ENCODE measurements at regions of chr7 and their contacts with region 1.

Region 1: DNA sequence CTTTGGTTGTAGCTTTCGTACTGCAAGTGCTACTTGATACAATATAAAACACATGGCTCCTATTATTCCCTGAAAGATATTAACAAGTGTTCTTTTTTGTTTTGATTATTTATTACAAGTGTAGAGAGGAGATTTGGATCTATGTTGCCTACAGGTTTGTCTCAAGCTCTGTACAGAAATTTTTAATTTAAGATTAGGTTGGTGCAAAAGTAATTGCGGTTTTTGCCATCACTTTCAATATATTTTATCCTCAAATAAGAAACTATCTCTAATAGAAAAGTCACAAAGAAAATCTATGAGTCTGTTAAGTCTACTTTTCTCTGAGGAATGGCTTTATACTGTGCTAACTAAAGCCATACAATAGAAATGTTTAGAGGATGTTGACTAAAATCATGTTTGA is 1086.1 kb downstream of the GRM8 start:
- DNase-seq: no peak
- H3K4me3 ChIP-seq: no peak overlapping the region
- H3K27ac ChIP-seq: no peak overlapping the region
- H3K4me1 ChIP-seq: no peaks in the 10 kb centered on the region
- H3K27me3 ChIP-seq: no peaks in the 10 kb centered on the region
- CTCF ChIP-seq: no peak
- POLR2A ChIP-seq: no peak

Region 2: DNA sequence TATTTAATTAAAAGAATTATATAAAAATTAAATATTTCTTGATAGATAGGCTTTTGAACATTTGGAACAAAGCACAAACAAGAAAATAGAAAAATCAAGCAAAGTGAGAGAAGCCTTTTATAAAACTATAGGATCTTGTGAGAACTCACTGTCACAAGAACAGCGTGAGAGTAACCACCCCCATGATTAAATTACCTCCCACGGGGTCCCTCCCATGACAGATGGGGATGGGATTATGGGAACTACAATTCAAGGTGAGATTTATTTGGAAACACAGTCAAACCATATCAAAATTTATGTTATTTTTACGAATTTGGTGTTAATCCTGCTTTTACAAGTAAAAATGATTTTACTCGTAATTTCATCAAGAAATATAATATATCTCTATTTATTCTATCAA is 100.9 kb before region 1 on chr7:
- CTCF ChIA-PET with region 1: no interaction called
- POLR2A ChIA-PET with region 1: no interaction called
- dilution Hi-C with region 1: no loop called
- intact Hi-C with region 1: no loop called
- DNase-seq: no peak
- H3K4me3 ChIP-seq: no peak overlapping the region
- H3K27ac ChIP-seq: no peak overlapping the region
- H3K4me1 ChIP-seq: no peaks in the 10 kb centered on the region
- H3K27me3 ChIP-seq: no peaks in the 10 kb centered on the region
- CTCF ChIP-seq: no peak
- POLR2A ChIP-seq: no peak

Region 3: GRCh38 chr7:126083014-126083413 is 83.6 kb before region 1 on chr7:
- CTCF ChIA-PET with region 1: no interaction called
- POLR2A ChIA-PET with region 1: no interaction called
- dilution Hi-C with region 1: no loop called
- intact Hi-C with region 1: no loop called
- DNase-seq: no peak
- H3K4me3 ChIP-seq: no peak overlapping the region
- H3K27ac ChIP-seq: no peak overlapping the region
- H3K4me1 ChIP-seq: no peaks in the 10 kb centered on the region
- H3K27me3 ChIP-seq: no peaks in the 10 kb centered on the region
- CTCF ChIP-seq: no peak
- POLR2A ChIP-seq: no peak

Region 4: DNA sequence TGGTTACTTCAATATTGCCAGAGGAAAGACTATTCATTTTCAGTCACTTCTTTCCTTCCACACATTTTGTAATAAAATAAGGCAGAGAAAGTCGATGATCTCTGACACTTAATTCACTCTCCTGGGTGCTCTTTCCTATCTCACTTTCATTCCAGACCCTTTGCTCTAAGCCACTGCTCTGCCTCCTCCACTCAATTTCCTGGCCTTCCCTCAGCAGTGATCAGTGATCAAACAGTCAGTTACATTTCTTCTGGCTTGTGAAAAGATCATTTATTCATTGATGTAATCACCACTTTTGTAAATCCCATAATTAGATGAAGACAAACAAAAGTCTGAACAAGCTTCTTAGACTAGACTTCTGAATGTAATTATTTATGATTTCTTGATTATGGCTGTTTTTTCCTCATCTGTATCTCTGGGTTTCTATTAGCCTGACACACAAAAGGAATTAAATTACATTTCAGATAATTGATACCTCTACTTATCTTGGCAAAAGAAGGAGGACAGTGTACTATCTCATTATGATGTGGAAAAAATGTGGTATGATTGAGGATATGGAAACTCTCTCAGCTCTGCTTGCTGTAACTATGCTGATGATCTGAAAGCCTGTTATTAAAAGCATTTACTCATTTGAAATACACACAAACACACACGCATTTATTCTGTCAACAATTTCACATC is 16.2 kb before region 1 on chr7:
- CTCF ChIA-PET with region 1: no interaction called
- POLR2A ChIA-PET with region 1: no interaction called
- dilution Hi-C with region 1: no loop called
- intact Hi-C with region 1: loop called (anchors 1 kb)
- DNase-seq: no peak
- H3K4me3 ChIP-seq: no peak overlapping the region
- H3K27ac ChIP-seq: no peak overlapping the region
- H3K4me1 ChIP-seq: no peaks in the 10 kb centered on the region
- H3K27me3 ChIP-seq: no peaks in the 10 kb centered on the region
- CTCF ChIP-seq: no peak
- POLR2A ChIP-seq: no peak

Region 5: DNA sequence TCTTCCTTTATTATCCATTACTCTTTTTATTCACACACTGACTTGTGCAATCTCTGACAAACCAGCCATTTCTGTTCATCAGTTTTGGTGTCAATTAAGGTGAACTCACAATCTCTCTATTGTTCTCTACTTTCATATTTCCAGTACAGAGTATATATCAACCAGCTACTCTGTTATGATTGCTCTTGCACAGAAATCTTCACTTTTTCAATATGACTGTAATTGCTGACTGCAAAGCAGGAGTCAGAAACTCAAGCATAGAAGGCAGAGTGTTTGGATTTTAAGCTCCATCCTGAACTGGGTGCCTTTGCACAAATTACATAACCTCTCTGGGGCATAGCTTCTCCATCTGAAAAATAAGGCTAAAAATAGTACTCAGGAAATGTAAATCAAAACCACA is 44.1 kb after region 1 on chr7:
- CTCF ChIA-PET with region 1: no interaction called
- POLR2A ChIA-PET with region 1: no interaction called
- dilution Hi-C with region 1: no loop called
- intact Hi-C with region 1: no loop called
- DNase-seq: no peak
- H3K4me3 ChIP-seq: no peak overlapping the region
- H3K27ac ChIP-seq: no peak overlapping the region
- H3K4me1 ChIP-seq: no peaks in the 10 kb centered on the region
- H3K27me3 ChIP-seq: no peaks in the 10 kb centered on the region
- CTCF ChIP-seq: no peak
- POLR2A ChIP-seq: no peak

Measured in endothelial cell of umbilical vein (primary cell).